ENCODE measurements at regions of chr7 and their contacts with region 1.

Region 1: GRCh38 chr7:99918959-99919813 is at the start of gene TRIM4:
- DNase-seq: peak; percentile 89 to 90 (median 89)
- H3K4me3 ChIP-seq: peak within 1 kb of the TSS; percentile 85 to 89
- H3K4me3 Mint-ChIP-seq: peak within 1 kb of the TSS; percentile 95 to 98 (median 96)
- H3K27ac ChIP-seq: peak within 1 kb of the TSS; percentile 94
- H3K27ac Mint-ChIP-seq: peak within 1 kb of the TSS; percentile 95 to 99 (median 98)
- H3K4me1 ChIP-seq: peaks cover 41% of the 10 kb centered on the region
- H3K4me1 Mint-ChIP-seq: peaks cover 37 to 61% (median 48%) of the 10 kb centered on the region in 4 donors
- H3K27me3 ChIP-seq: no peaks in the 10 kb centered on the region
- H3K27me3 Mint-ChIP-seq: no peaks in the 10 kb centered on the region
- total RNA-seq, gene TRIM4: 69.0 to 69.7 TPM

Region 2: DNA sequence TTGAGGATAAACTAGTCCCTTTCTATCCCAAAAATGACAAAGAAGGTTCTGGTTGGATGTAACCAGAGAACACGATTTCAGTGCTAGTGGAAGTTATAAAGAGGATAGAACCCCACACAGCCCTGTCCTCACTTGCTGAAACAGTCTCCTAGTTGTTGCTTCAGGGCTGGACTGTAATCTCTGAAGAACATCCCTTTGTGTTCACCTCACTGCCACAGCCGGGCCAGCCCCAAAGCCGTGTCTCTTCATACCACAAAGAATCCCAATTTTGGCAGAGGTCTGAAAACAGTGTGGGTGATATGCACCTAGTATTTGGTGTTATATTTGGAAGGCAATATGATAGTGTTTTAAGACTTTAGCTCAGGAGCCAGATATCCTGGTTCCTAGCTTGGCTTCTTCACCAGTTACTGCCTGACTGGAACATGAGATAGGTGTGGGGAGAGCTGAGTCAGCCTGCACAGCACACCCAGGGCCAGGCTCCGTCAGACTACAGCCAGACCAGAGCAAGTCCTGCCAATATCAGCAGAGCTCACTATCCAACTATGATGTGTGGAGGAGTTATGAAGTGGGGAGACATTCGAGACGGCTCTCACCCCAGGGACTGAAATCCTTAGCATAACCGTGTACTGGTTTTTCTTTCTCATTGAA is 156.4 kb before region 1 on chr7:
- CTCF ChIA-PET with region 1: no interaction called
- POLR2A ChIA-PET with region 1: no interaction called
- intact Hi-C with region 1: no loop called
- DNase-seq: no peak
- H3K4me3 ChIP-seq: no peak overlapping the region
- H3K4me3 Mint-ChIP-seq: no peak overlapping the region
- H3K27ac ChIP-seq: no peak overlapping the region
- H3K27ac Mint-ChIP-seq: no peak overlapping the region
- H3K4me1 ChIP-seq: no peaks in the 10 kb centered on the region
- H3K4me1 Mint-ChIP-seq: no peaks in the 10 kb centered on the region
- H3K27me3 ChIP-seq: no peaks in the 10 kb centered on the region
- H3K27me3 Mint-ChIP-seq: peaks cover 0 to 4% of the 10 kb centered on the region in 2 donors

Region 3: GRCh38 chr7:99949638-99950228 is 30.5 kb after region 1 on chr7:
- CTCF ChIA-PET with region 1: interaction called, 26 read pairs
- POLR2A ChIA-PET with region 1: no interaction called
- intact Hi-C with region 1: no loop called
- DNase-seq: peak in 3 of 5 donors; percentile 8 to 16 (median 14)
- H3K4me3 ChIP-seq: no peak overlapping the region
- H3K4me3 Mint-ChIP-seq: no peak overlapping the region
- H3K27ac ChIP-seq: no peak overlapping the region
- H3K27ac Mint-ChIP-seq: no peak overlapping the region
- H3K4me1 ChIP-seq: no peaks in the 10 kb centered on the region
- H3K4me1 Mint-ChIP-seq: no peaks in the 10 kb centered on the region
- H3K27me3 ChIP-seq: no peaks in the 10 kb centered on the region
- H3K27me3 Mint-ChIP-seq: peaks cover 10 to 15% of the 10 kb centered on the region in 2 donors

Region 4: DNA sequence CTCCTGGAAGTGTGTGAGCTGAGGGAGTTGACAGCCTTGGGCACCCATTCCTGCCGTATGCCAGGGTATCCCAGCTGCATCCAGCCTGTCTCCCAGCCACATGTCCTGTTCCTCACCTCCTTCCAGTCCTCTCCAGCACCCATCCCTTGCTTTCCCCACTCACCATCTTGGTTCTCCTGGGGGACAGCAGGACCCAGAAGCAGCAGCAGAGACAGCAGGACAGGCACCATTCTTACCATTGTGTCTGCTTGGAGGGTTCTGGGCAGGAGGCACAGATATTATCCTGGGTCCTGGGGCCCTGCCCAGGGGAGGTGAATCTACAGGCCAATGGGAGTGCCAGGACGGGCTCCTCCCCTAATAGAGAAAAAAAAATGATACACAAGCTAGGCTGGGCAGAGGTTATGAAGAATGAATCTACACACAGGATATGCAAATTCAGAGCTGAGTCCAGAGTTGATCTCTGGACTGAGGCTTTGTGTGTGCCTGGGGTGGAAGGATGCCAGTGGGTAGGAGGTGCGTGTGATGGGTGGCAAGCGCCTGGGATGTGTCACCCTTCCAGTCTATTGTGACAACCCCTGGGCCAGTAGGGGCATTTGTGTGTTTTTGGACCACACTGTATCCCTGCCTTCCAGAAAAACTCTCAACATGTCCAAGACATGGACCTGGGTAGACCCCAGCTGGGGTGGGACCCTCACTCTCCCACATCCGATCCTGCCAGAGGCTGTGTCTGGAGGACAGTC is 56.8 kb after region 1 on chr7 and contains the start of gene AZGP1:
- CTCF ChIA-PET with region 1: interaction called, 17 read pairs
- POLR2A ChIA-PET with region 1: interaction called, 3 read pairs
- intact Hi-C with region 1: no loop called
- DNase-seq: no peak
- H3K4me3 ChIP-seq: no peak within 1 kb of the TSS
- H3K4me3 Mint-ChIP-seq: no peak within 1 kb of the TSS
- H3K27ac ChIP-seq: no peak within 1 kb of the TSS
- H3K27ac Mint-ChIP-seq: no peak within 1 kb of the TSS
- H3K4me1 ChIP-seq: no peaks in the 10 kb centered on the region
- H3K4me1 Mint-ChIP-seq: peaks cover 0 to 2% (median 0%) of the 10 kb centered on the region in 4 donors
- H3K27me3 ChIP-seq: no peaks in the 10 kb centered on the region
- H3K27me3 Mint-ChIP-seq: peaks cover 9 to 16% of the 10 kb centered on the region in 2 donors
- total RNA-seq, gene AZGP1: not detected

Region 5: DNA sequence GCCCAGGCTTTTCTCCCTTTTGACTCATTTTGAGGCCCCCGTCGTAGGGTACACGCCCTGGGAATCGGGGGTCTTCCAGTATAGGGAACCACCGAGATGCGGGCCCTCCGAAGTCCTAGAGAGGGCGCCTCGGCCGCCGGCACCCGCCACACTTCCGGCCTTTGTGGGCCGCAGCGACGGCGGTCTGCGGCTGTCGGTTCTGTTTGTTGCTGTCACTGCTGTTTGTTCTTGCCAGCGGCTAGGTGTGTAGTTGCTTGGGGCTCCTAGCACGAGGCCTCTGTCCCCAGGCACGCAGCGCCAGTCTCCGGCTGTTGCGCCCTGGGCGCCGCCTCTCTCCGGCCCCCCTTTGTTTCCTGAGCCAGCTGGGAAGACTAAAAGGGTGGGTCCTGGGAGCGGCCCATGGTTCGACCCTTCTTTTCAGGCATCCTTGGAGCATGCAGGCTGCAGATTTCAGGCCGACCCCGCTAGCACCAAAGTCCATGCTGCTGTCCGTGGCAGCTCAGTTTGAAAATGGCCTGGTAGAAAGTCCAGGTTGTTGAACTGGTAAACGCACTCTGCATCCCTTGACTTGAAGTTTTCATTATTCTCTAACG is 78.5 kb after region 1 on chr7:
- CTCF ChIA-PET with region 1: interaction called, 268 read pairs
- POLR2A ChIA-PET with region 1: interaction called, 11 read pairs
- intact Hi-C with region 1: no loop called
- DNase-seq: peak; percentile 72 to 78 (median 76)
- H3K4me3 ChIP-seq: peak overlapping the region in 1 of 2 donors; percentile 43
- H3K4me3 Mint-ChIP-seq: peak overlapping the region; percentile 58 to 80 (median 75)
- H3K27ac ChIP-seq: peak overlapping the region; percentile 3
- H3K27ac Mint-ChIP-seq: peak overlapping the region; percentile 69 to 95 (median 90)
- H3K4me1 ChIP-seq: peaks cover 18% of the 10 kb centered on the region
- H3K4me1 Mint-ChIP-seq: peaks cover 8 to 15% (median 12%) of the 10 kb centered on the region in 4 donors
- H3K27me3 ChIP-seq: no peaks in the 10 kb centered on the region
- H3K27me3 Mint-ChIP-seq: no peaks in the 10 kb centered on the region

Region 6: DNA sequence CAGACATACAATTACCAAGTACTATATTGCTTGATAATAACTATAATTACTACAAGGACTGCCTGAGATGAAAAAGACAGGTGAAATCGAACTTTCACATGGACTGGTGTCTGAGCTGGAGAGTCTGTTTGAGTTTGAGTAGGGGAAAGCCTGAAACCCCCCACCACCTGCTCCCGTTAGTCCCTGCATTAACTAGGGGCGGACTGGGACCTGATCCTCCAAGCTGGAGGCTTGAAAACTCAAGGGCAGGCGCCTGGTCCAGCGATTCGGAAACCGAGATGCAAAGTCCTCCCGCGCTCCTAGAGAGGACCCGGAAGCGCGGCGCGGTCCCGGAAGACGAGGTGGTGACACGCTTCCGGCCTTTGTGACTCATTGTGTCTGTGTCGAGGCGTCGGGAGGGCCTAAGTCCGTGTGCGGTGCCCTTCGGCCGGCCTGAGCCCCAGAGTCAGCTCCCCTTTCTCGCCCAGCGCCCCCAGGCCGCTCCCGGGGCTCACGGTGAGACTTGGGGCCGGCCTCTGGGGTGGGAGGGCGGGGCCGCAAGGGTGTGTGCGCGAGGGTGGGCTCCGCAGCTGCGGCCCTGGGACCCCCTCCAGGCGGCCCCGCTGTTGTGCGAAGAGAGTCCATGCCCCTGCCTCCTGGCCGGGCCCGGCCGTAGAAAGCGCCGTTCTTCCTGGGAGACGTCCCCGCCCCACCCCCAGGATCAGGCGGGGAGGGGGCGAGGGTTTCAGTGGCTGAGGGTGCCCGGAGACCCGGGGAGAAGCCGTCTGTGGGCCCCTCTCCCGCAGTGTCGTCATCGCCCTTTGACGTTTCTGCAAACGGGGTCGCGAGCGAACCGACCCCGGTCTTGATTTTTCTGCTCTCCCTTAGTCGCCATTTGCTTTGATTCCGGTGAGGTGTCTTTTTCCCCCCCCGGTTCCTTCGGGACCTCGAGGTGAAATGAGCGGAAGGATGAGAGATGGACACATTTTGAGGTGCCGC is 96.3 kb after region 1 on chr7 and contains the start of gene ZKSCAN1:
- CTCF ChIA-PET with region 1: interaction called, 3 read pairs
- POLR2A ChIA-PET with region 1: interaction called, 23 read pairs
- intact Hi-C with region 1: no loop called
- DNase-seq: peak; percentile 81 to 87 (median 85)
- H3K4me3 ChIP-seq: peak within 1 kb of the TSS; percentile 92
- H3K4me3 Mint-ChIP-seq: peak within 1 kb of the TSS; percentile 87 to 97 (median 96)
- H3K27ac ChIP-seq: peak within 1 kb of the TSS; percentile 96
- H3K27ac Mint-ChIP-seq: peak within 1 kb of the TSS; percentile 95 to 99 (median 98)
- H3K4me1 ChIP-seq: peaks cover 43% of the 10 kb centered on the region
- H3K4me1 Mint-ChIP-seq: peaks cover 28 to 53% (median 42%) of the 10 kb centered on the region in 4 donors
- H3K27me3 ChIP-seq: no peaks in the 10 kb centered on the region
- H3K27me3 Mint-ChIP-seq: no peaks in the 10 kb centered on the region
- total RNA-seq, gene ZKSCAN1: 94.8 to 101 TPM

Region 7: DNA sequence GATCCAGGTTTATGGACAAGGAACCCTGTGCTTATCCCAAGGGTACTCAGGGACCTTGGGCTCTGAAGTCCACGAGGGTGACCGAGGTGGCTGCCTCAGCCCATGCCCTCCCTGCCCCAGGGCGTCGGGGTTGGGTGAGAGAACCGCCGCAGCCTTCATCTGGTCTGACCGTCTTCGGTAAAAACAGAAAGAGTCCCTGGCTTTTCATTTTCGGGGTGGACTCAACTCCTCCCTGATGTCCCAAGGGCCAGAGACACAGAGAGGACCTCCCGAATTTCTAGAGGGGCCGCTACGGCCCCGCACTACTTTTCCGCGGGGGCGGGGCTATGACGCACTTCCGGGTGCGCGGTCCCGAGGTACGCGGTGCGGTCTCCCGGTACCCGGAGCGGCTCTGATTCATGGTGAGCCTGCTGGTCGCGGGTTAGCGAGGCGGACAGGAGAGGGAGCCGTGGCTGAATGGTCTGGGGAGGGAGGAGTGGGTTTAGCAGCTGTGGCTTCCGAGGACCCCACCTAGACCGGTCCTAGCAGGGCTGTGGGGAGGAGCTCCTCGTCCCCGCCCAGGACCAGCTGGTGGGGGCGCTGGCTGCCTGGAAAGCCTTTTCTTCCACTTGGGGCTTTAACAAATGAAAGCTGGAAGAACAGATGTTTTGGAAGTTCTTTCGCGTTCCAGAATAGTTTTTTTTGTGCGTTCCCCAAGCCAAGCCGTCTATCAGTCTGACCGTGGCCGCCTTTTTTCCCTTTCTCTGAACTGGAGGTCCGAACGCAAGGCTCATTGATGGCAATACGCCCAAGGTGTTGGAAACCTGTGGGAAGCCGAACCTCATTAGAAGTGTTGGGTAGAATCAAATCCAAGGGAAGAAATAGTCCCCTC is 130.5 kb after region 1 on chr7 and contains the start of gene ZSCAN21:
- CTCF ChIA-PET with region 1: no interaction called
- POLR2A ChIA-PET with region 1: interaction called, 11 read pairs
- intact Hi-C with region 1: no loop called
- DNase-seq: peak; percentile 76 to 82 (median 77)
- H3K4me3 ChIP-seq: peak within 1 kb of the TSS; percentile 67 to 94
- H3K4me3 Mint-ChIP-seq: peak within 1 kb of the TSS; percentile 91 to 97 (median 94)
- H3K27ac ChIP-seq: peak within 1 kb of the TSS; percentile 83
- H3K27ac Mint-ChIP-seq: peak within 1 kb of the TSS; percentile 91 to 98 (median 97)
- H3K4me1 ChIP-seq: peaks cover 13% of the 10 kb centered on the region
- H3K4me1 Mint-ChIP-seq: peaks cover 11 to 28% (median 18%) of the 10 kb centered on the region in 4 donors
- H3K27me3 ChIP-seq: no peaks in the 10 kb centered on the region
- H3K27me3 Mint-ChIP-seq: no peaks in the 10 kb centered on the region
- total RNA-seq, gene ZSCAN21: 9.9 to 10.6 TPM

Region 8: GRCh38 chr7:100075418-100075817 is 156.2 kb after region 1 on chr7:
- CTCF ChIA-PET with region 1: no interaction called
- POLR2A ChIA-PET with region 1: no interaction called
- intact Hi-C with region 1: no loop called
- DNase-seq: no peak
- H3K4me3 ChIP-seq: no peak overlapping the region
- H3K4me3 Mint-ChIP-seq: no peak overlapping the region
- H3K27ac ChIP-seq: no peak overlapping the region
- H3K27ac Mint-ChIP-seq: no peak overlapping the region
- H3K4me1 ChIP-seq: peaks cover 6% of the 10 kb centered on the region
- H3K4me1 Mint-ChIP-seq: peaks cover 12 to 24% (median 16%) of the 10 kb centered on the region in 4 donors
- H3K27me3 ChIP-seq: no peaks in the 10 kb centered on the region
- H3K27me3 Mint-ChIP-seq: no peaks in the 10 kb centered on the region